ENCODE measurements at regions of chr16 and their contacts with region 1.

Region 1: GRCh38 chr16:48353565-48354163 is 31.5 kb downstream of the SIAH1 start:
- DNase-seq: no peak
- H3K4me3 ChIP-seq: no peak overlapping the region
- H3K27ac ChIP-seq: no peak overlapping the region
- H3K4me1 ChIP-seq: peaks cover 0 to 14% (median 0%) of the 10 kb centered on the region in 3 donors
- H3K27me3 ChIP-seq: no peaks in the 10 kb centered on the region
- CTCF ChIP-seq: peak; percentile 65 to 94 (median 88)
- POLR2A ChIP-seq: no peak

Region 2: GRCh38 chr16:48409839-48410611 is 56.4 kb after region 1 on chr16:
- intact Hi-C with region 1: no loop called
- DNase-seq: no peak
- H3K4me3 ChIP-seq: no peak overlapping the region
- H3K27ac ChIP-seq: peak overlapping the region in 3 of 4 donors; percentile 7 to 63 (median 11)
- H3K4me1 ChIP-seq: peaks cover 0 to 11% (median 3%) of the 10 kb centered on the region in 3 donors
- H3K27me3 ChIP-seq: no peaks in the 10 kb centered on the region
- CTCF ChIP-seq: no peak
- POLR2A ChIP-seq: no peak

Region 3: GRCh38 chr16:48526058-48526957 is 172.6 kb after region 1 on chr16:
- intact Hi-C with region 1: loop called (anchors 5 kb)
- DNase-seq: no peak
- H3K4me3 ChIP-seq: no peak overlapping the region
- H3K27ac ChIP-seq: no peak overlapping the region
- H3K4me1 ChIP-seq: peaks cover 0 to 12% (median 0%) of the 10 kb centered on the region in 3 donors
- H3K27me3 ChIP-seq: no peaks in the 10 kb centered on the region
- CTCF ChIP-seq: peak; percentile 18 to 77 (median 53)
- POLR2A ChIP-seq: no peak

Region 4: GRCh38 chr16:48623304-48624016 is 269.8 kb after region 1 on chr16:
- intact Hi-C with region 1: loop called (anchors 10 kb)
- DNase-seq: no peak
- H3K4me3 ChIP-seq: peak overlapping the region; percentile 27 to 66 (median 46)
- H3K27ac ChIP-seq: peak overlapping the region; percentile 55 to 87 (median 70)
- H3K4me1 ChIP-seq: peaks cover 15 to 28% (median 17%) of the 10 kb centered on the region in 3 donors
- H3K27me3 ChIP-seq: no peaks in the 10 kb centered on the region
- CTCF ChIP-seq: peak; percentile 96 to 99 (median 96)
- POLR2A ChIP-seq: no peak

Measured in esophagus squamous epithelium (tissue), 5 donors.